ENCODE measurements at regions of chr12 and their contacts with region 1.

Region 1: DNA sequence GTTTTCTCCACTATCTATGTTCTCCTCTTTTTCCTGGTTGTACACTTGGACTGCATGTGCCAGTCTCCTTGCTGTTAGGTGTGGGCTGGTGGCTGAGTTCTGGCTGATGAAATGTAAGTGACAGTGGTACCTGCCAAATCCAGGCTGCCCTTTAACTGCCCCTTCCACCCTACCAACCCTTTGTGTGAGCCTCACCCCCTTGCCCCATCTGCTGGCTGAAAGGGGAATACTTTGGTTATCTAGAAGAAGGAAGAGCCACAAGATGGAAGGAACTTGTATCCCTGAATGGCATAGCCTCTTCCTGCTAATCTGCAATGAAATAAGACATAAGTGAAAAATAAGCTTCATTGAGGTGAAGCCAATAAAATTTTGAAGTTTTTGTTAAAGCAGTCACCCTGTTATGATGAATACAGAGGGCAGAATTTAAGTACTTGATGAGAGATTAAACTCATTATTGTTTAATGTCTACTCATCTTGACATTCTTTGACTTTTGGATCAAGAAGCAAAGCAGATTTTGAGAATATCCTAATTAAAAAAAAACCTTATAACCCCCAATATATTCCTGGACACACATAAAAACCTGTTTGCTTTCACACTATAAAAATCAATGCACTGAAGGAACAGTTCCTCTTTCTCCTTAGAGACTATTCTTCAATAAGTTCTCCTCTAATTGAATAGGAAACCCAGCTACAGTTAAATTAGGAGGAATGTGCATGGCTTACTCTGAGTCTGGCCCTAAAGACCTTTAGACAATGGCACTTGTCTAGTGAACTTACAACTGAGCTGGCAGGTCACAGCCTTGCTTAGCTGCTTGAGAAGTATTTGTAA is 262.6 kb upstream of the BTG1 start:
- DNase-seq: peak; percentile 32
- H3K4me3 Mint-ChIP-seq: no peak overlapping the region
- H3K27ac Mint-ChIP-seq: no peak overlapping the region
- H3K4me1 Mint-ChIP-seq: peaks cover 41% of the 10 kb centered on the region
- H3K27me3 Mint-ChIP-seq: no peaks in the 10 kb centered on the region

Region 2: DNA sequence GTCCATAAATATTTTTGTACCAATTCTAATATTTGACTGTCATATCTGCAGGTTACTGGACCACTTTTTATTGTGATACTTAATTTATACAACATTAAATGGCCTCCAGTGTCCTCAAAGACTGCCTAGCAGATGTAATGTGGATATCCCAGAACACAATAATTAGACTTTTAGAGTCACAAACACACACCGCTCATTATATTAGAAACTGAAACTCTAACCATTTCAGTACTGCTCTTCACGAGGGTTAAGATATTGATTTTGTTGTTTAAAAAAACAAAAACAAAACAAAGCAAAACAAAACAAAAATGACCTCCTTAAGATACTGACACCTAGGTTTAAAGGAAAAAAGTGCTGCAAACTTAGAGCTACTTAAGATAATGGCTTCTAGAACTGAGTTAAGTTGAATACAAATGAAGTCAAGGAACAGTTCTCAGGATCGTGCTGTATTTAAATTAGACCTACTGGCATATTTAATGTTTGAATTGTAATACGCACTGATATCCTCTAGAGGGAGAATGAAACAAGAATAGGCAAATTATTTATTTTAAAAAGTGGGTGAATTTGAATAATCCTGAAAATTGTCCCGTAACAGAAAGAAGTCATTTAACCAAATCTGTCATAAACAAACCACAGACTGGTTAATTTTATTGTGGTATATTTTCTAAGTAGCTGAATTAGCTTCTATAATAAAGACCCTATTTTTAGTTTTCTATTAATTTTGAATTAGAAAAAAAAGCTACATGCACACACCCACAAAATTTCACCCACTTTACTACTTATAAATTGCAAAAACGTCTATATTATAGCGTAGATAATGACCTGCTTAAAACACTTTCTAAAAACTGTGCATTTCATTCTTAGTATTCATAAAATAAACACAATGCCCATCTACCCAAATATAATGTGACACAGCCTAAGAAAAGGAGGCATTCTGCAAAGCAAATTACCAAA is 830.4 kb before region 1 on chr12:
- intact Hi-C with region 1: loop called (anchors 5 kb)
- DNase-seq: no peak
- H3K4me3 Mint-ChIP-seq: peak overlapping the region; percentile 38
- H3K27ac Mint-ChIP-seq: no peak overlapping the region
- H3K4me1 Mint-ChIP-seq: peaks cover 9% of the 10 kb centered on the region
- H3K27me3 Mint-ChIP-seq: peaks cover 5% of the 10 kb centered on the region

Region 3: GRCh38 chr12:91877022-91877421 is 531.3 kb before region 1 on chr12:
- intact Hi-C with region 1: loop called (anchors 5 kb)
- DNase-seq: peak; percentile 75
- H3K4me3 Mint-ChIP-seq: peak overlapping the region; percentile 54
- H3K27ac Mint-ChIP-seq: peak overlapping the region; percentile 94
- H3K4me1 Mint-ChIP-seq: peaks cover 48% of the 10 kb centered on the region
- H3K27me3 Mint-ChIP-seq: no peaks in the 10 kb centered on the region

Region 4: DNA sequence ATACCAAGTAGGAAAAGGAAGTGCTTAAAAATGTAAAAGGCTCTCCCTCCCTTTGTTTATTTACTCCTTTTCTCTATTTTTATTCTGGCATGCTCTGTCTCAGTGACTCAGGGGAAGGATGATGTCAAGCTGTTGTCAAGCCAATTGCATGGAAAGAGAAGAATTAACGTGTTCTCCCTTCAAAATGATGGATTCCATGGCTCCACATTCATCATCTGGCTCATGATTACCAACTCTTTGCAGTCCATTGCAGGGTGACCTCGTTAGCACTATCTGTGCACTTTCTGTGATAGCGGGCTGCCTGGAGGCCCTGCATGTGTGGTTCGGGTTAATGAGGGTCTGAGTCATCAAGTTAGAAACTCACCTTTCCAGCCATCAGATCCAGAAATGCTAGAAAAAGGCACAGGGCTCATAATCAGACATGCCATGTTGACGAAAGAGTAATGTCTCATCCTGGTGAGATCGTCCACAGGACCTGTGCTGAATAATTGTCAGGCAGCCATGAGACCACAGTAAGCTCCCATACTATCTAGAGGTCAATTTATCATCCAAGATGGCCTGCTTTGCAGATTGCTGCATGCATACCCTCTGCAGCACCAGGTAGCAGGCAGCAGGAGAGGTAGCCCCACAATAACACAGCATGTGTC is 183.5 kb before region 1 on chr12:
- intact Hi-C with region 1: no loop called
- DNase-seq: no peak
- H3K4me3 Mint-ChIP-seq: no peak overlapping the region
- H3K27ac Mint-ChIP-seq: no peak overlapping the region
- H3K4me1 Mint-ChIP-seq: peaks cover 14% of the 10 kb centered on the region
- H3K27me3 Mint-ChIP-seq: no peaks in the 10 kb centered on the region

Region 5: GRCh38 chr12:92297932-92298696 is 110.2 kb before region 1 on chr12:
- intact Hi-C with region 1: loop called (anchors 5 kb)
- DNase-seq: peak; percentile 10
- H3K4me3 Mint-ChIP-seq: no peak overlapping the region
- H3K27ac Mint-ChIP-seq: peak overlapping the region; percentile 77
- H3K4me1 Mint-ChIP-seq: peaks cover 10% of the 10 kb centered on the region
- H3K27me3 Mint-ChIP-seq: no peaks in the 10 kb centered on the region

Region 6: GRCh38 chr12:92396647-92397252 is 11.5 kb before region 1 on chr12:
- intact Hi-C with region 1: no loop called
- DNase-seq: no peak
- H3K4me3 Mint-ChIP-seq: no peak overlapping the region
- H3K27ac Mint-ChIP-seq: no peak overlapping the region
- H3K4me1 Mint-ChIP-seq: peaks cover 57% of the 10 kb centered on the region
- H3K27me3 Mint-ChIP-seq: no peaks in the 10 kb centered on the region

Region 7: DNA sequence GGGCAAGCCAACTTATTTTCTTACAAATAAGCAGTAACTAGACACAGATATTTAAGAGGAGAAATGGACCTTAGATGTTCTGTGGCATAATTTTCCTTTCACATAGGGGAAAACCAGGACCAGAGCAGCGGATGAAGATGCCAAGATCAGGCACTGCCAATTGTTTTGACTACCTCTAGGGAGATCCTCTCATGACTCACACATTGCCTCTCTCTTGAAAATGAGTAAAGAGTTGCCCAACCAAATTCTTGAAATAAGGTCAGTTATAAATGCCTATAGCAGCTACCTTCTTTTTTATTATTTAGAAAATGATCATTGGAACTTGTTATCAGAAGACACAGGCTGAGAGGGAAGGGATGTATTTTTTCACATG is 31.1 kb after region 1 on chr12:
- intact Hi-C with region 1: no loop called
- DNase-seq: no peak
- H3K4me3 Mint-ChIP-seq: no peak overlapping the region
- H3K27ac Mint-ChIP-seq: no peak overlapping the region
- H3K4me1 Mint-ChIP-seq: peaks cover 2% of the 10 kb centered on the region
- H3K27me3 Mint-ChIP-seq: no peaks in the 10 kb centered on the region

Region 8: DNA sequence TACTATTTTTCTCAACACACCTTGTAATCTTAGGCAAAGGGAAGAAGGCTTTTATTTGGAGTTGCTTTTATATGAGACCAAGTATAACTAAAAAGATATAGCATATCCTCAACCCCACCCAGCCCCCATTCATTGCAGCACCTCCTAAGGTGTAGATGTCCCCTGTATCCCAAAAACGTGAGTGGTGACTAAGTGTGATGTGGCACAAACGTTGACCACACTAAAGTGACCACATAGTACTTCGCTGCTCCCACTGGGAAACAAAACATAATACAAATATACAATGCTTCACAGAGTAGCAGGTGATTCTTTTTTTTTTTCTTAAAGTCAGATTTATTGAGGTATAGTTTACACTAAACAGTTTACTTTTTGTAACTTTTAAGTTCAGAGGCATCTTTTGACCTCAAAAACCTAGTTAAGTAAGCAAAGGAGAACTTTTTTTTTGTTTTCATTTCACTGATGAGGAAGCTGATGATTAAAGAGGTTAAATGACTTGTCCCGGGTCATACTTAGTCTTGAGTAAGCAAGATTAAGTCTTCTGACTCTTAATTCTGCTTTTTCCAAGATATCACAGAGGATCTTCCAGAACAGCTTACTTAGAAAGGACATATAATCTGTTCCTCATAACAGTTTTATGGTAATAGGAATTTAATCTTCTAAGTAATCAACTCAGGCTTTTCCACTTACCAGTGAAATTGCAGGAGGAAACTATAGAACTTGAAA is 49.3 kb after region 1 on chr12:
- intact Hi-C with region 1: no loop called
- DNase-seq: no peak
- H3K4me3 Mint-ChIP-seq: no peak overlapping the region
- H3K27ac Mint-ChIP-seq: no peak overlapping the region
- H3K4me1 Mint-ChIP-seq: peaks cover 14% of the 10 kb centered on the region
- H3K27me3 Mint-ChIP-seq: no peaks in the 10 kb centered on the region

Region 9: GRCh38 chr12:92469837-92470236 is 61.6 kb after region 1 on chr12:
- intact Hi-C with region 1: loop called (anchors 1 kb)
- DNase-seq: no peak
- H3K4me3 Mint-ChIP-seq: no peak overlapping the region
- H3K27ac Mint-ChIP-seq: no peak overlapping the region
- H3K4me1 Mint-ChIP-seq: peaks cover 23% of the 10 kb centered on the region
- H3K27me3 Mint-ChIP-seq: no peaks in the 10 kb centered on the region

Region 10: GRCh38 chr12:92593734-92594402 is 185.6 kb after region 1 on chr12:
- intact Hi-C with region 1: loop called (anchors 5 kb)
- DNase-seq: peak; percentile 66
- H3K4me3 Mint-ChIP-seq: peak overlapping the region; percentile 19
- H3K27ac Mint-ChIP-seq: peak overlapping the region; percentile 94
- H3K4me1 Mint-ChIP-seq: peaks cover 60% of the 10 kb centered on the region
- H3K27me3 Mint-ChIP-seq: no peaks in the 10 kb centered on the region

Measured in activated T-helper 2 cell treated with anti-CD3 and anti-CD28 coated beads, Interferon-gamma antibody, Interleukin-2, Interleukin-4, amounts not matched to agents 10 μg/mL and 5 μg/mL and 100 μg/mL, durations not matched to agents 14 hours and 24 hours and 36 hours (primary cell).